ENCODE measurements at regions of chr16 and their contacts with region 1.

Region 1: GRCh38 chr16:73172241-73172972 is 124.5 kb upstream of the ZFHX3 start:
- DNase-seq: peak; percentile 98
- H3K4me3 ChIP-seq: no peak overlapping the region
- H3K27ac ChIP-seq: peak overlapping the region; percentile 72
- H3K4me1 ChIP-seq: peaks cover 29% of the 10 kb centered on the region
- H3K27me3 ChIP-seq: no peaks in the 10 kb centered on the region
- CTCF ChIP-seq: peak; percentile 17 to 31
- POLR2A ChIP-seq: peak; percentile 55

Region 2: GRCh38 chr16:72985148-72985941 is 187.1 kb before region 1 on chr16:
- CTCF ChIA-PET with region 1: no interaction called
- POLR2A ChIA-PET with region 1: no interaction called
- dilution Hi-C with region 1: no loop called
- intact Hi-C with region 1: no loop called
- DNase-seq: no peak
- H3K4me3 ChIP-seq: no peak overlapping the region
- H3K27ac ChIP-seq: no peak overlapping the region
- H3K4me1 ChIP-seq: peaks cover 10% of the 10 kb centered on the region
- H3K27me3 ChIP-seq: no peaks in the 10 kb centered on the region
- CTCF ChIP-seq: no peak
- POLR2A ChIP-seq: no peak

Region 3: DNA sequence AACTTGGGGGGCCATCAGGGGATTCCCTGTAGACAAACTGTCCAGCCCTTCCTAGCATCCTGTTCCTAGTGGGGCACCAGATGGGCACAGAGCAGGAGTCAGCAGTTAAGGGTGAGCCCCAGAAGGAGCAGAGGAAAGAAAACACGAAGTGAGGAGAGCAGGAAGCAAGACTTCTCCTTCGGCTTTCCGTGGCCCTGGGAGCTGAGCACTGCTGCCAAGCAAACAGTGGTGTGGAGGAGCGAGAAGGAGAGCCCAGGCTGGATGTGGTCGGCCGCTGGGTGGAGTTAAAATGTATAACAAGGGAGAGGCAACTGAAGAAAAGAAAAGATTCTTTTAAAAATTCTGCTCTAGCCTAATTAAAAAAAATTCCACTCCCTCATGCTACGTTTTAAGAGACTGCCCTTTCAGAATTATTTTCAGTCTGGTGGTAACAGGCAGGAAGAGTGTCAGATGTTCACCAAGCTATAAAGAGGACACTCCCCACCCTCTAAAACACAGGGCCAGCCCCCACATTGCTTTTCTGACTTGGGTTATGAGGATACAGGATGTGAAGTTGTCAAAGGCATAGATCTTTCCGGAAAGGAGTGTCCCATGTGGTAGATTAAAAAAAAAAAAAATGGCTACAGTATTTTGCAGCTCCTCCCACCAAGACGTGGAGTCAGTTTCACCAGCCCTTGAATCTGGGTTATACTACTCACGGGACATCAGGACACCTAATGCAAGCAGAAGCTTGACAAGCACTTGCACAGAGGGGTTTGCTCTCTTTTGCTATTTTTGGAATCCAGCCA is 49.6 kb before region 1 on chr16:
- CTCF ChIA-PET with region 1: interaction called, 9 read pairs
- POLR2A ChIA-PET with region 1: interaction called, 3 read pairs
- dilution Hi-C with region 1: no loop called
- intact Hi-C with region 1: loop called (anchors 1 kb)
- DNase-seq: peak; percentile 24
- H3K4me3 ChIP-seq: no peak overlapping the region
- H3K27ac ChIP-seq: no peak overlapping the region
- H3K4me1 ChIP-seq: peaks cover 5% of the 10 kb centered on the region
- H3K27me3 ChIP-seq: no peaks in the 10 kb centered on the region
- CTCF ChIP-seq: no peak
- POLR2A ChIP-seq: no peak

Region 4: DNA sequence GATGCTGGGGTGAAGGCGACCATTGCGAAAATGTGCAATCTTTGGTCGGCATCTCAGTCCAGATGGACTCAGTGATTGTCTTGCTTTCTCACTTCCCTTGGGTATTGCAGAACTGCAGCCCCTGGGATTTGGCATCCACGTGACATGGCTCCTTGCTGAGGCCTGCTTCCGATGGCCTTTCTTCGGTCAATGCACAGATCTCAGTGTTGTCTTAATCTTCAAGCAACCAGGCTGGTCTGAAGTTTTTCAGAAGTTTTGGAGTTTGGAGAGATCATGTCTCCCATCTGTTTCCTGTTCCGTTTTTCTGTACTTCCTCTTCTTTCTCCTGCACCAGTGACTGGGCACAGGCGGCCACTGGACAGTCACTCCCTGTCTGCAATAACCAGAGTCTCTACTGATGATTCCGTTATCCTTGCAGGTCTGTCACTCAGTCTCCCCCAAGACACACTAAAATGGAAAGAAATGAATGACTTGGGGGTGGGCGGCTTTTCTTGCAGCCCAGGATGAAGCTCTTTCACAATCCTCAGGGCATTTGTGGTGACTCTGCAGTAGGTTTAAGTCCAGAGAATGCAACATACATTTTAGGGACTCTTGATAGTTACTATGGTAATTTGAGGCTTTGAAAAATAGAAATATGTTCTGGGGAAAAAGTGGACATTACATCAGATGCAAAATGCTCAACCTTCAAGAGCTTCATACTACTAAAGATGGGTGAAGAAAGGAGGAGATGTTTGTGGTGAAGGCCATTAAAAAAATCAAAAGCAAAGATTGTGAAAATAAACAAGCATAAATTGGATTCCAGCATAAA is 18.1 kb before region 1 on chr16:
- CTCF ChIA-PET with region 1: interaction called, 7 read pairs
- POLR2A ChIA-PET with region 1: no interaction called
- dilution Hi-C with region 1: no loop called
- intact Hi-C with region 1: loop called (anchors 1 kb)
- DNase-seq: peak; percentile 87
- H3K4me3 ChIP-seq: no peak overlapping the region
- H3K27ac ChIP-seq: peak overlapping the region; percentile 33
- H3K4me1 ChIP-seq: peaks cover 27% of the 10 kb centered on the region
- H3K27me3 ChIP-seq: peaks cover 0 to under 1% of the 10 kb centered on the region in 2 experiments
- CTCF ChIP-seq: no peak
- POLR2A ChIP-seq: peak; percentile 29

Region 5: GRCh38 chr16:73161977-73162376 is 10.4 kb before region 1 on chr16:
- CTCF ChIA-PET with region 1: interaction called, 18 read pairs
- POLR2A ChIA-PET with region 1: no interaction called
- dilution Hi-C with region 1: no loop called
- intact Hi-C with region 1: no loop called
- DNase-seq: no peak
- H3K4me3 ChIP-seq: no peak overlapping the region
- H3K27ac ChIP-seq: no peak overlapping the region
- H3K4me1 ChIP-seq: peaks cover 3% of the 10 kb centered on the region
- H3K27me3 ChIP-seq: peaks cover 0 to 2% of the 10 kb centered on the region in 2 experiments
- CTCF ChIP-seq: no peak
- POLR2A ChIP-seq: no peak

Region 6: GRCh38 chr16:73405851-73406250 is 233.4 kb after region 1 on chr16:
- CTCF ChIA-PET with region 1: no interaction called
- POLR2A ChIA-PET with region 1: no interaction called
- dilution Hi-C with region 1: no loop called
- intact Hi-C with region 1: no loop called
- DNase-seq: no peak
- H3K4me3 ChIP-seq: no peak overlapping the region
- H3K27ac ChIP-seq: no peak overlapping the region
- H3K4me1 ChIP-seq: no peaks in the 10 kb centered on the region
- H3K27me3 ChIP-seq: no peaks in the 10 kb centered on the region
- CTCF ChIP-seq: no peak
- POLR2A ChIP-seq: no peak